ENCODE measurements at regions of chr1 and their contacts with region 1.

Region 1: DNA sequence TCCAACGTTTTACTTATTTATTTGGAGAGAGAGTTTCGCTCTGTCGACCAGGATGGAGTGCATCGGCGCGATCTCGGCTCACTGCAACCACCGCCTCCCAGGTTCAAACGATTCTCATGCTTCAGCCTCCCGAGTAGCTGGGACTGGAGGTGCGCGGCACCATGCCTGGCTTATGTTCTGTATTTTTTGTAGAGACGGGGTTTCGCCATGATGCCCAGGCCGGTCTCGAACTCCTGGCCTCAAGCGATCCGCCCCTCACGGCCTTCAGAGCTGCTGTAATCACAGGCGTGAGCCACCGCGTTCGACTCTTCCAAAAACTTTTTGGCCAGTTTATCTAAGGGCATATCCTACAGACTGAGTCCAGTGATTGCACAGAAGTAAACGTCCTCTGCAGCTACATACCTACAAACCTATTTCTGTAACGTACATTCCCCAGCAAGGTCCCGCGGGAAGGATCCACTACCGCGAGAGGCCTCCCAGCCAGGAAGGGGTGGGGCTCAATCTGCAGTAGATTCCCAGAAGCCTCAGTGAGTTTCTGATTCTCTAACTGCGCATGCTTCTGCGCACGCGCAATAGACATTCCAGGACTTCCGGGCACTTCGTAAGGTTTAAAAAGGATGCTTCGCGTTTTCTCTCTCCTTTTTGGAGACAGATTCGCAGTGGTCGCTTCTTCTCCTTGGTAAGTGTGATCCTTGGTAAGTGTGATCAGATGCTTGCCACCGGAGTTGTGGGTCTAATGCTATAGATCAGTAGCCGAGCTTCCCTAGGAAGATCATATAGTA is at the start of gene RCC1:
- DNase-seq: peak; percentile 78 to 98 (median 96)
- ATAC-seq: peak; percentile 97
- H3K4me3 ChIP-seq: peak within 1 kb of the TSS; percentile 79
- H3K4me3 Mint-ChIP-seq: peak within 1 kb of the TSS; percentile 94 to 100 (median 99)
- H3K27ac ChIP-seq: peak within 1 kb of the TSS; percentile 88
- H3K27ac Mint-ChIP-seq: peak within 1 kb of the TSS; percentile 96 to 100 (median 99)
- H3K4me1 ChIP-seq: peaks cover 29 to 36% of the 10 kb centered on the region in 2 donors
- H3K4me1 Mint-ChIP-seq: peaks cover 29 to 48% (median 41%) of the 10 kb centered on the region in 7 donors
- H3K27me3 ChIP-seq: no peaks in the 10 kb centered on the region
- H3K27me3 Mint-ChIP-seq: peaks cover 0 to 3% (median 0%) of the 10 kb centered on the region in 5 donors
- total RNA-seq, gene RCC1: 9.8 to 60.7 (median 19.7) TPM

Region 2: GRCh38 chr1:28160782-28161266 is 344.8 kb before region 1 on chr1:
- CTCF ChIA-PET with region 1: no interaction called
- POLR2A ChIA-PET with region 1: no interaction called
- intact Hi-C with region 1: no loop called
- DNase-seq: no peak
- ATAC-seq: no peak
- H3K4me3 ChIP-seq: no peak overlapping the region
- H3K4me3 Mint-ChIP-seq: no peak overlapping the region
- H3K27ac ChIP-seq: no peak overlapping the region
- H3K27ac Mint-ChIP-seq: no peak overlapping the region
- H3K4me1 ChIP-seq: no peaks in the 10 kb centered on the region
- H3K4me1 Mint-ChIP-seq: peaks cover 0 to 14% (median 3%) of the 10 kb centered on the region in 7 donors
- H3K27me3 ChIP-seq: no peaks in the 10 kb centered on the region
- H3K27me3 Mint-ChIP-seq: peaks cover 5 to 64% (median 10%) of the 10 kb centered on the region in 5 donors

Region 3: DNA sequence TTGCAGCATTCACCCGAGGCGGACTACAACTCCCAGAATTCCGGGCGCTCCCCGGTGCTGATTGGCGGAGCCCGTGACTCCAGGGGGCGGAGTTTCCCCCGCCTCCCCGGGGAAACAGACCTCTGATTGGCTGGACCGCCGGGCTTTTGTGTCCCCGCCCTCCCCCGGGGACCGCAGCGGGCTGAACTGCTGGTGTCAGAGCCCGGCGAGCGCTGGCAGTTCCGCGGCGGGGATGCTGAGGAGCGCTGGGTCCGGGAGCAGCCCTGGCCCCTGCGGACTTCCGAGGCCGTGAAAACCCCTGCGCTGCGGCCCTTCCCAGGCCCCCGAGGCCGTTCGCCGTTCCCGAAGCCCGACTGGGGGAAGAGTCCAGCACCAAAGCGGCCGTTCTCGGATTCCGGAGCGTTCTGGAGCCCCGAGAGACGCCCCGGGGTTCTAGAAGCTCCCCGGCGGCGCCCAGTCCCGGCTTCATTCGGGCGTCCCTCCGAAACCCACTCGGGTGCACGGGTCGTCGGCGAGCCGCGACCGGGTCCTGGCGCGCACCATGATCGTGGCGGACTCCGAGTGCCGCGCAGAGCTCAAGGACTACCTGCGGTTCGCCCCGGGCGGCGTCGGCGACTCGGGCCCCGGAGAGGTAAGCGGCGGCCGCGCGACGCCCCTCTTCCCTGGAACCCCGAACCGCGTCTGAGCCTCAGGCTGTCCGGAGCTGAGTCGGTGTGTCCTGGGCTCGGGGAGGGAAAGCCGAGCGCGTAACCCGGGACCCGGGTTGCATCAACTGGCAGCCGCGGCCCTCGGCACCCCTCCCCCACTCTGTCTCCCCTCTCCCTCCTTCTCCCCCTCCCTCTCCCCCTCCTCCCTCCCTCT is 246.1 kb before region 1 on chr1 and contains the start of gene SESN2:
- CTCF ChIA-PET with region 1: interaction called, 3 read pairs
- POLR2A ChIA-PET with region 1: interaction called, 6 read pairs
- intact Hi-C with region 1: loop called (anchors 1 kb)
- DNase-seq: peak; percentile 97 to 99 (median 99)
- ATAC-seq: peak; percentile 98
- H3K4me3 ChIP-seq: peak within 1 kb of the TSS; percentile 95
- H3K4me3 Mint-ChIP-seq: peak within 1 kb of the TSS; percentile 65 to 90 (median 82)
- H3K27ac ChIP-seq: peak within 1 kb of the TSS; percentile 77
- H3K27ac Mint-ChIP-seq: peak within 1 kb of the TSS; percentile 58 to 96 (median 74)
- H3K4me1 ChIP-seq: peaks cover 38 to 47% of the 10 kb centered on the region in 2 donors
- H3K4me1 Mint-ChIP-seq: peaks cover 32 to 54% (median 49%) of the 10 kb centered on the region in 7 donors
- H3K27me3 ChIP-seq: no peaks in the 10 kb centered on the region
- H3K27me3 Mint-ChIP-seq: peaks cover 0 to 2% (median 0%) of the 10 kb centered on the region in 5 donors
- total RNA-seq, gene SESN2: 4.5 to 50.7 (median 11.8) TPM

Region 4: GRCh38 chr1:28341591-28341990 is 164.0 kb before region 1 on chr1:
- CTCF ChIA-PET with region 1: no interaction called
- POLR2A ChIA-PET with region 1: no interaction called
- intact Hi-C with region 1: no loop called
- DNase-seq: no peak
- ATAC-seq: no peak
- H3K4me3 ChIP-seq: no peak overlapping the region
- H3K4me3 Mint-ChIP-seq: no peak overlapping the region
- H3K27ac ChIP-seq: no peak overlapping the region
- H3K27ac Mint-ChIP-seq: no peak overlapping the region
- H3K4me1 ChIP-seq: no peaks in the 10 kb centered on the region
- H3K4me1 Mint-ChIP-seq: peaks cover 0 to 9% (median 0%) of the 10 kb centered on the region in 7 donors
- H3K27me3 ChIP-seq: no peaks in the 10 kb centered on the region
- H3K27me3 Mint-ChIP-seq: no peaks in the 10 kb centered on the region

Region 5: DNA sequence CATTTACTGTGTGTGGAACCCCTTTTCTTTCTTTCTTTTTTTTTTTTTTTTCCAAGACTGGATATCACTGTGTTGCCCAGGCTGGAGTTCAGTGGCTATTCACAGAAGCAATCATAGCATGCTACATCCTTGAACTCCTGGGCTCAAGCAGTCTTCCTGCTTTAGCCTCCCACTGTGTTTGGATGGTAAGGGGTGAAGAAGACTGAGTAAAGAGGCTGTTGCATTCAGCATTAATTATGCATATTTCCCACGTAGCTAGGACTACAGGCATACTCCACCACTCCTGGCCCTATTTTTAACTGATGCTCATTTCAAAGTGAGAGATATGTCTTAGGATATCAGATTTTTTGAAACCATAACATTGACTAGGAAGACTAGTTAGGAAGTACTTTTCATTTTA is 96.5 kb before region 1 on chr1:
- CTCF ChIA-PET with region 1: no interaction called
- POLR2A ChIA-PET with region 1: no interaction called
- intact Hi-C with region 1: loop called in 1 of 2 experiments (anchors 5 kb)
- DNase-seq: no peak
- ATAC-seq: no peak
- H3K4me3 ChIP-seq: no peak overlapping the region
- H3K4me3 Mint-ChIP-seq: no peak overlapping the region
- H3K27ac ChIP-seq: no peak overlapping the region
- H3K27ac Mint-ChIP-seq: peak overlapping the region in 1 of 9 donors; percentile 39
- H3K4me1 ChIP-seq: no peaks in the 10 kb centered on the region
- H3K4me1 Mint-ChIP-seq: peaks cover 0 to 14% (median 11%) of the 10 kb centered on the region in 7 donors
- H3K27me3 ChIP-seq: no peaks in the 10 kb centered on the region
- H3K27me3 Mint-ChIP-seq: no peaks in the 10 kb centered on the region

Region 6: DNA sequence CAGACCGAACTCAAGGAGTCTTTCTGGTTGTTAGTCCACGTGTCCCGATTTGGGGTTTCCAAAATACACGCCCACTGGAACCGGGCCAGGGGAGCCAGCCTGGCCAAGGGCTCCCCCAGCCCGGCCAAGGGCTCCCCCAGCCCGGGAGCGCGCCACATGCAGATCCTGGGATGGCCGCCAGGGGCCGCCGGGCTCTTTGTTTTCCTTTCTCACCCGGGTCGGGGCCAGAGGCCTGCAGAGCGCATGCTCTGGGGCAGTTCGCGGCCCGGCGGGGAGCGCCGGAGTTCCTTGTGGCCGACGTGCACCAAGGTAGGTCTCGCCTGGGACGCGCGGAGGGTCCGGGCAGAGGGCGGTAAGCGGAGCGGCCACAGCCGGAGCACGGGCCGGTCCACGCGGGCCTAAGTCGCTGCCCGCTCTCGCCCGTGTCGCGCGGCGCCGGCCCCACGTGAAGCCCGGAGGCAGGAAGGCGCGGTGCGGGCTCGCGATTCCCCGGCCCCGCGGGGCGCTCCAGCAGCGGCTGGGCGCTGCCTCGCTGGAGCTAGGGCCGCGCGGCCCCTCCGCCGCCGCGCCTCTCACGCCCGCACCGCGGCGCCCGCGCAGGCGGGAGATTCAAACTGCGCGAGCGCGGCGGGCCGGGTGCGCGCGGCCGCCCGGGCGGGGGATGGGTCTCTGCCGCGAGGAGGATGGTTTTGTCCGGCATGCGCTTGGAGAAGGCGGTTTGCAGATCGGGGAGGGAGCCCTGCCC is 12.6 kb after region 1 on chr1:
- CTCF ChIA-PET with region 1: interaction called, 8 read pairs
- POLR2A ChIA-PET with region 1: interaction called, 59 read pairs
- intact Hi-C with region 1: loop called (anchors 1 kb)
- DNase-seq: peak; percentile 77 to 94 (median 84)
- ATAC-seq: peak; percentile 95
- H3K4me3 ChIP-seq: peak overlapping the region; percentile 81
- H3K4me3 Mint-ChIP-seq: peak overlapping the region; percentile 76 to 91 (median 88)
- H3K27ac ChIP-seq: peak overlapping the region; percentile 76
- H3K27ac Mint-ChIP-seq: peak overlapping the region; percentile 59 to 91 (median 83)
- H3K4me1 ChIP-seq: peaks cover 9 to 10% of the 10 kb centered on the region in 2 donors
- H3K4me1 Mint-ChIP-seq: peaks cover 16 to 46% (median 23%) of the 10 kb centered on the region in 7 donors
- H3K27me3 ChIP-seq: no peaks in the 10 kb centered on the region
- H3K27me3 Mint-ChIP-seq: no peaks in the 10 kb centered on the region

Region 7: DNA sequence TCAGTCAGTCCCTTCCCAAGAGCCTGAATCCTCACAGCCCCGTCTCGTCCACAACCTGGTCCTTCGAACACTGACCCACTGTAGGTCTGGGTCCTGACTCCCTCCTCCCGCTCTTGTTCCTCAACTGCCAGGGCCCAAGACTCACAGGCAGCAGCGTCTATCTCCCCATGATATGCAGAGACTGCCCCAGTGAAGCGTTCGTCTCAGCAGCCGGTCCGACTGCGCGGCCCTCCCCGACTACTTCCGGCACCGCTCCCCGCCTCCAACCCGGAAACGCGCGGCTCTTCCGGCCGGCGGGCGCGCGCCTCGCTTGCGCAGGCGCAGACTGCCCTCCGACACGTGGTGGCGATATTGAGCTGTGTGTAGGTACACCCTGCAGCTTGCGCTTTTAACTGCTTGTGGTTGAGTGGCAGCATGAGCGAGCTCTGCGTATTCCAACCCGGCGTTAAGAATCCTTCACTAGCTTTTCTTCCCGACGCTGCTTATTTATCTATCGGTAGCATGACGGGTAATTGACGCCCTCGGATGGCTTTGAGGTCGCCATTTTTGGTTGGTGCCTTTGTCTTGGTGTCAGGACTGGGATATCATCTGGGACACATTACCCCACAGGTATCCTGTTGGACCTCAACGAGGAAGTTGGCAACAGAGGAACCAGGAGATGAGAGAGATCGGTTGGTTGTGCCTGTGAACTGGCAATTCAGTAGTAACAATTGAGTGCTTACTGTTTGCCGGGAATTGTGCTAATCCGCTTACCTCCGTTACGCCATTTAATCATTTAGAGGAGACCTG is 137.4 kb after region 1 on chr1 and contains the start of gene TAF12:
- CTCF ChIA-PET with region 1: no interaction called
- POLR2A ChIA-PET with region 1: interaction called, 41 read pairs
- intact Hi-C with region 1: loop called (anchors 1 kb)
- DNase-seq: peak; percentile 81 to 92 (median 86)
- ATAC-seq: peak; percentile 91
- H3K4me3 ChIP-seq: peak within 1 kb of the TSS; percentile 93
- H3K4me3 Mint-ChIP-seq: peak within 1 kb of the TSS; percentile 94 to 100 (median 98)
- H3K27ac ChIP-seq: peak within 1 kb of the TSS; percentile 95
- H3K27ac Mint-ChIP-seq: peak within 1 kb of the TSS; percentile 93 to 99 (median 99)
- H3K4me1 ChIP-seq: peaks cover 26 to 35% of the 10 kb centered on the region in 2 donors
- H3K4me1 Mint-ChIP-seq: peaks cover 30 to 65% (median 55%) of the 10 kb centered on the region in 7 donors
- H3K27me3 ChIP-seq: no peaks in the 10 kb centered on the region
- H3K27me3 Mint-ChIP-seq: peaks cover 0 to 2% (median 0%) of the 10 kb centered on the region in 5 donors
- total RNA-seq, gene TAF12: 13.0 to 34.6 (median 19.3) TPM

Region 8: DNA sequence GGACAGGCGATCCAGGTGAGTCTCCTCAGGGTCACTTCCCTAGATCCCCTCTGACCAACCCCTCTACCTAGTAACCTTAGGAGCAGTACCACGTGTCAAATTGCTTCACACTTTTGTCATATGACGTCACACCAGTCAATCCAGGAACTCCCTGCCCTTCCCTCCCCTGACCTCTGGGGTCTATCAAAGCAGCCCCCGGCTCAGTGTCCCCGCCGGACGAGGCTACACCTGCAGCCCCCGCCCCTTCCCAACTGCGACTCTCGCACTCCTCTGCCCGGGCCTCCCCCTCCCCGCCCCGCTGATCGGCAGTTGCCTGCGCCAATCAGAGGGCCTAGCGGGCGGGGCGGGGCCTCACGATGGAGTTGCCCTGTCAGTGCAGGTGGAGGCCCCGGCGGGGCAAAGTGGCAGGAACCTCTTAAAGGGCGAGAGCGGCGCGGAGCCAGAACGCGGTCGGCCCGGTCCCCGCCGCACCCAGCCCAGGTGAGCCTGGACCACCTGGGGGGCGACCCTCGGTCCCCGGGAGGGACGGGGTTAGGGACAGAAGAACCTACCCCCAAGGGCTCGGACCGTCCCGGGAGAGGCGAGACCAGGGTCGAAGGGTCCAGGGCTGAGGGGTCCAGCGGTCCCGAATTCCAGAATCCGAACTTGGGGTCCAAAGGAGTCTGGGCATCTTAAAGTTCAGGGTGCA is 381.3 kb after region 1 on chr1:
- CTCF ChIA-PET with region 1: no interaction called
- POLR2A ChIA-PET with region 1: no interaction called
- intact Hi-C with region 1: loop called in 1 of 2 experiments (anchors 5 kb)
- DNase-seq: peak; percentile 87 to 97 (median 91)
- ATAC-seq: peak; percentile 83
- H3K4me3 ChIP-seq: peak overlapping the region; percentile 98
- H3K4me3 Mint-ChIP-seq: peak overlapping the region; percentile 70 to 95 (median 84)
- H3K27ac ChIP-seq: peak overlapping the region; percentile 79
- H3K27ac Mint-ChIP-seq: peak overlapping the region; percentile 81 to 98 (median 94)
- H3K4me1 ChIP-seq: peaks cover 32 to 36% of the 10 kb centered on the region in 2 donors
- H3K4me1 Mint-ChIP-seq: peaks cover 37 to 68% (median 50%) of the 10 kb centered on the region in 7 donors
- H3K27me3 ChIP-seq: no peaks in the 10 kb centered on the region
- H3K27me3 Mint-ChIP-seq: no peaks in the 10 kb centered on the region

Region 9: DNA sequence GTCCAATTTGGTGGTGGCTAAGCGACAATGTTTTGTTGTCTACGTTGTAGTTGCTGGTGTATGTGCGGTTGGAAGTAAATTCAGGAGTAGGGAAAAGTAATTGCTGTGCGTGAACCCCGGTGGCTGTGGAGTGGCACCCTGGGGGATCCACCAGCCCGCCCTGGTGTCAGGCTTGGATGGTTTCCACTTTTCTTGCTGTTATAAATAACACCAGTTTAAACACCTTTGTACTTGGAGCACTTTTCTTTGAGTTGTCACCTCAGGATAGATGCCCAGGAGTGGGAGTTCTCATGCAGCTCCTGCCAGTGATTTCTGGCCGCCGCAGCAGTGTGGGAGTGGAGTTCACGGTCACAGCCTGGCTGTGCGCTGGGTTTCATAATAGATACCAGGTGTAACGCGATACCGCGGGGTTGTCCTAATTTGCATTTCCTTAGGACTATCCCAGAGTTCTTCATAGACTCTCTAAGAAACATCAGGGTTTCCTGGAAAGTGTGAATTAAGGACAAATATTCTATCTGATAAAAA is 630.9 kb after region 1 on chr1:
- CTCF ChIA-PET with region 1: no interaction called
- POLR2A ChIA-PET with region 1: no interaction called
- intact Hi-C with region 1: no loop called
- DNase-seq: no peak
- ATAC-seq: no peak
- H3K4me3 ChIP-seq: no peak overlapping the region
- H3K4me3 Mint-ChIP-seq: no peak overlapping the region
- H3K27ac ChIP-seq: no peak overlapping the region
- H3K27ac Mint-ChIP-seq: no peak overlapping the region
- H3K4me1 ChIP-seq: no peaks in the 10 kb centered on the region
- H3K4me1 Mint-ChIP-seq: peaks cover 0 to 4% (median 0%) of the 10 kb centered on the region in 7 donors
- H3K27me3 ChIP-seq: no peaks in the 10 kb centered on the region
- H3K27me3 Mint-ChIP-seq: peaks cover 0 to 16% (median 4%) of the 10 kb centered on the region in 5 donors

Measured in naive thymus-derived CD4-positive, alpha-beta T cell (primary cell).